ENCODE measurements at regions of chr15 and their contacts with region 1.

Region 1: GRCh38 chr15:39807791-39808190 is 25.1 kb upstream of the FSIP1 start:
- DNase-seq: no peak
- H3K4me3 ChIP-seq: no peak overlapping the region
- H3K27ac ChIP-seq: no peak overlapping the region
- H3K4me1 ChIP-seq: no peaks in the 10 kb centered on the region
- H3K27me3 ChIP-seq: no peaks in the 10 kb centered on the region
- CTCF ChIP-seq: no peak
- POLR2A ChIP-seq: no peak

Region 2: DNA sequence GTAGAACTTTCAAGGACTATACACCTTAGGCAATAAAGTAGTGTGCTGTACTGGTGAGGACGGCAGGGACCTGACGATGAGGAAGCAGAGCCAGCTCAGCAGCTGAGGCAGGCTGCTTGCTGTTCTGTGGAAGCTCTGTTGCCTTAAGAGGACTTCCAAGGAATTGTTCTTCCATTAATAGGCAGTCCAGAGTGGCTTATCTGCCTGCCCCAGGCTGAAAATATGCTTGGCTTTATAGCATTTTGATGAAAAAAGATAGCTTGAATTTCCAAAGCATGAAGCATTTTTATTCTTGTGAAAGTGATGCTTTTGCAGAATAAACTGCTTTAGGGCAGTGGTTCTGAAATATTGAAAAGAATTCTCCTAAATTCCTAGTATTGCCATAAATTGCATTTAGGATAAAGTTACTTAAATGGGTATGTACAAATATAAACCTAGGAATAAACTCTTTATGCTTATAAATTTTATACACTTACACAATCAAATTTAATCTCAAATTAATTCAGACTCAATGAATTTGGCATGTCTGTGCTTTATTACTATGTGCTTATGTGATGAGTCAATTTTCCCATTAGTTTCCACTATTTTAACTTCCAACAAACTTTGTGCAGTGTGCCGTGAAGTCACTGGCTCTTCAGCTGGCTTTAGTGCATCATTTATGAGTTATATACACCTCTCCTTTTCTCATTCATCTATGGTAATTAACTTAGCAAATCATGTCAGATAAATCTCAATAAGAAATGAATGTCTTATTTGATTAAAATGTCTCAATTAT is 1012.1 kb before region 1 on chr15:
- intact Hi-C with region 1: loop called (anchors 5 kb)
- DNase-seq: no peak
- H3K4me3 ChIP-seq: no peak overlapping the region
- H3K27ac ChIP-seq: no peak overlapping the region
- H3K4me1 ChIP-seq: no peaks in the 10 kb centered on the region
- H3K27me3 ChIP-seq: no peaks in the 10 kb centered on the region
- CTCF ChIP-seq: no peak
- POLR2A ChIP-seq: no peak

Region 3: DNA sequence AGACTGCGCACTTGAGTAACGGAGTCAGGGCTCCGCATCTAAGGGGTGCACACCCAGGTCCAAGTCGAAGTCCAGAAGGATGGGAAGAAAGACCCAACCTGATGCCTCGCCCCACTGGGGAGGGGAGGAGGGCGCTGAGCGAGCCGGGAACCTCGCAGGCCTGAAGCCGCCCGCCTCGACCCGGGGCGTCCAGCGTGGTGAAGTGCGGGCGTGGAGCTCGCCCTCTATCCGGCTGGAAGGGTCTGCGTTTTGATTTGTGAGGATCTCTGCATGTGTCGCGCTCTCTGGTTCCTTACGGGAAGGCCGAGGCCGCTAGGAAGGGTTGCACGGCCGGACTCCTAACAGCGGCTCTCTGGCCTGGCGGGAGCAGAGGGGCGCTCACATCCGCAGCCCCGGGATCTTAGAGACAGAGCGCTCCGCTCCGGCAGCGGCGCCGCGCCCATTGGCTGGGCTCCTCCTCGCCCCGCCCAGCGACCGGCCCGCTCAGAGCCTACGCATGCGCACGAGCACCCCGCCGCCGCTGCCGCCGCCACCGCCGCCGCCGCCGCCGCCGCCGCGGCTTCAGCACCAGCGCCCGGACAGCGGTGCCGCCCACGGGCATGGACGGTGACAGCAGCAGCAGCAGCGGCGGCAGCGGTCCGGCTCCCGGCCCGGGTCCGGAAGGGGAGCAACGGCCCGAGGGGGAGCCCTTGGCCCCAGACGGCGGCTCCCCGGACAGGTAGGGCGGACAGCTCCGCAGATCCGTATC is 550.1 kb after region 1 on chr15 and contains the start of gene DISP2:
- intact Hi-C with region 1: no loop called
- DNase-seq: peak; percentile 76 to 88
- H3K4me3 ChIP-seq: peak within 1 kb of the TSS; percentile 34 to 67 (median 49)
- H3K27ac ChIP-seq: no peak within 1 kb of the TSS
- H3K4me1 ChIP-seq: peaks cover 4 to 6% of the 10 kb centered on the region in 2 donors
- H3K27me3 ChIP-seq: no peaks in the 10 kb centered on the region
- CTCF ChIP-seq: no peak
- POLR2A ChIP-seq: no peak
- total RNA-seq, gene DISP2: under 0.01 to 0.88 (median under 0.01) TPM